ENCODE measurements at regions of chr11 and their contacts with region 1.

Region 1: DNA sequence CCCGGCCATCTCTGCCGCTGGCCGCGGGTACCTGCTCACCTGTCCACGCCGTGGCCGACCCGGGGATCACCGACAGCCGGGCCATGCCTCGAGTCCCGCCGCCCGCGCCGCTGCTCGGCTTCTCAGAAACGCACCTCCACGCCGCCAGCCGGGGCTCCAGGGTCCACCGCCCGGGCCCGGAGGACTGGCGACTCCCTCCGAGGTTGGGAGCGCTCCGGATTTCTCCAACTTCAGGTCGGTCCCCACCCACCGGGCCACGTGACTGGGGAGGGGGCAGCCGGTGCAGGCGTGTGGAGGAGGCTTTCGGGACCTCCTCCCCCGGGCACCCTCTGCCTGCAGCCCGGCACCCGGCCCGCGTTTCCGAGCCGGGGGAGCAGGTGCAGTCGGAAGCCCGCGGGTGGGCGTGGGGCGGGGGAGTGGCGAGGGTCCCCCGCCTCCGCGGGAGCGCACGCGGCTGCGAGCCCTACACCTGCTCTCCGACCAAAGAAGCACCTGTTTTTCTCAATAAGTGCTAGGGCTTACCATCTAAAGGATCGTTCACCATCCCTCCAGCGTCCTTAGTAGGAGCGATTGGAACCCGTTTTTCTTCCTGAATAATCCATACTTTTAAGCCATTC is 617 bp upstream of the NRIP3 start:
- DNase-seq: peak in 4 of 5 donors; percentile 4 to 50 (median 20)
- H3K4me3 ChIP-seq: peak overlapping the region; percentile 19
- H3K4me3 Mint-ChIP-seq: peak overlapping the region; percentile 63 to 81 (median 67)
- H3K27ac ChIP-seq: no peak overlapping the region
- H3K27ac Mint-ChIP-seq: peak overlapping the region in 5 of 8 donors; percentile 0 to 51 (median 22)
- H3K4me1 ChIP-seq: peaks cover 12% of the 10 kb centered on the region
- H3K4me1 Mint-ChIP-seq: peaks cover 14 to 20% (median 18%) of the 10 kb centered on the region in 3 donors
- H3K27me3 ChIP-seq: peaks cover 17% of the 10 kb centered on the region
- H3K27me3 Mint-ChIP-seq: peaks cover 14 to 23% of the 10 kb centered on the region in 2 donors

Region 2: DNA sequence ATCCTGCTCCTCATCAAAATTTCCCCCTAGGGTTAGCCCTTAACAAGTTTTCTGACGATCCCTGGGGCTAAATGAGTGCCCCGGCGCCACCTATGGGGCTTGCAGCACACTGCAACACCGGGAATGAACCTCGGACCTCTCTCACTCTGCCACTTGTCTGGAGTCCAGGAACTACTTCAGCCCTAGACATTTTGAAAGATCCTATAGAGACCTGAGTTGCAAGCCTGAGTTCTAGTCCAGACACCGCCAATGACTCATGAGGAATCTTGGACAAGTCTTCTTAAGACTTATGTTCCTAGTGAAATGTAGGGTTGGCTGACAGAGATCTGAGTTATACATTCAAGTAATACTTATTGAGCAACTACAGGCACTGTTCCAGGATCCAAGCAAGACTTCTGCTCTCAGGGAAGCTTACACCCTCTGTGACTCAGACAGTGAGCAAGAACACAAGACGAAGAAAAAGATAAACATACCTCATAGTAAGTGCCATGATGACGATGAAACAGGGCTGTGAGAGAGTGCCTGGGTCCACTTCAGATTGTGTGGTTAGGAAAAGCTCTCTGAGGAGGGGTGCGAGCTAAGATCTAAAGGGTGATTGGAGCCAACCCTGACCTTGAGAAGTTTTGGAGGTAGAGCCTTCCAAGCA is 400.2 kb before region 1 on chr11:
- CTCF ChIA-PET with region 1: no interaction called
- POLR2A ChIA-PET with region 1: no interaction called
- DNase-seq: peak in 1 of 5 donors; percentile 6
- H3K4me3 ChIP-seq: no peak overlapping the region
- H3K4me3 Mint-ChIP-seq: no peak overlapping the region
- H3K27ac ChIP-seq: no peak overlapping the region
- H3K27ac Mint-ChIP-seq: no peak overlapping the region
- H3K4me1 ChIP-seq: no peaks in the 10 kb centered on the region
- H3K4me1 Mint-ChIP-seq: no peaks in the 10 kb centered on the region
- H3K27me3 ChIP-seq: peaks cover 5% of the 10 kb centered on the region
- H3K27me3 Mint-ChIP-seq: peaks cover 17 to 30% of the 10 kb centered on the region in 2 donors

Region 3: GRCh38 chr11:9015677-9016076 is 11.3 kb after region 1 on chr11:
- CTCF ChIA-PET with region 1: interaction called, 21 read pairs
- POLR2A ChIA-PET with region 1: no interaction called
- DNase-seq: peak; percentile 8 to 68 (median 41)
- H3K4me3 ChIP-seq: no peak overlapping the region
- H3K4me3 Mint-ChIP-seq: no peak overlapping the region
- H3K27ac ChIP-seq: no peak overlapping the region
- H3K27ac Mint-ChIP-seq: no peak overlapping the region
- H3K4me1 ChIP-seq: peaks cover 6% of the 10 kb centered on the region
- H3K4me1 Mint-ChIP-seq: peaks cover 8 to 25% (median 11%) of the 10 kb centered on the region in 3 donors
- H3K27me3 ChIP-seq: no peaks in the 10 kb centered on the region
- H3K27me3 Mint-ChIP-seq: peaks cover 5 to 10% of the 10 kb centered on the region in 2 donors

Measured in CD8-positive, alpha-beta memory T cell (primary cell).